ENCODE measurements at regions of chr14 and their contacts with region 1.

Region 1: GRCh38 chr14:53109105-53110041 is 43.8 kb downstream of the DDHD1 start:
- DNase-seq: peak; percentile 76
- H3K4me3 Mint-ChIP-seq: no peak overlapping the region
- H3K27ac Mint-ChIP-seq: no peak overlapping the region
- H3K4me1 Mint-ChIP-seq: peaks cover 20% of the 10 kb centered on the region
- H3K27me3 Mint-ChIP-seq: no peaks in the 10 kb centered on the region

Region 2: DNA sequence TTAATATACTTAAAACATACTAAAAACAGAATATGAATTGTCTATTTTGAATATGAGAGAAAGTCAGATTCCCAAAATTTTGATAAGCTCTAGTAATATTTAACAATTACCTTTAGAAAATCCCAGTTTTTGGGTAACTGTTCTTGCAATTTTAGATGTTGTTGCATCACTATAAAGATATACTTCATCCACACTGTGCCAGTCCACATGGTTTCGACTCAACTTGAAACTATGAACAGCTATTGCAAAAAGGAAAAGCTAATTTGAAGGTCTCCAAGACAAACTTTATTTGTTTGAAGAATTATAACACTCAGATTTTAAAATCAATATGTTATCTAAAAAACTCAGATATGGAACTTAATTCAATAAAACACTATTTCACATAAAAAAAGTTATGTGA is 16.2 kb before region 1 on chr14:
- CTCF ChIA-PET with region 1: interaction called, 3 read pairs
- intact Hi-C with region 1: loop called (anchors 2 kb)
- DNase-seq: peak; percentile 27
- H3K4me3 Mint-ChIP-seq: no peak overlapping the region
- H3K27ac Mint-ChIP-seq: peak overlapping the region; percentile 41
- H3K4me1 Mint-ChIP-seq: peaks cover 7% of the 10 kb centered on the region
- H3K27me3 Mint-ChIP-seq: no peaks in the 10 kb centered on the region

Region 3: GRCh38 chr14:53126731-53127130 is 17.4 kb after region 1 on chr14:
- CTCF ChIA-PET with region 1: interaction called, 7 read pairs
- intact Hi-C with region 1: loop called (anchors 1 kb)
- DNase-seq: no peak
- H3K4me3 Mint-ChIP-seq: peak overlapping the region; percentile 56
- H3K27ac Mint-ChIP-seq: peak overlapping the region; percentile 72
- H3K4me1 Mint-ChIP-seq: peaks cover 38% of the 10 kb centered on the region
- H3K27me3 Mint-ChIP-seq: no peaks in the 10 kb centered on the region

Region 4: DNA sequence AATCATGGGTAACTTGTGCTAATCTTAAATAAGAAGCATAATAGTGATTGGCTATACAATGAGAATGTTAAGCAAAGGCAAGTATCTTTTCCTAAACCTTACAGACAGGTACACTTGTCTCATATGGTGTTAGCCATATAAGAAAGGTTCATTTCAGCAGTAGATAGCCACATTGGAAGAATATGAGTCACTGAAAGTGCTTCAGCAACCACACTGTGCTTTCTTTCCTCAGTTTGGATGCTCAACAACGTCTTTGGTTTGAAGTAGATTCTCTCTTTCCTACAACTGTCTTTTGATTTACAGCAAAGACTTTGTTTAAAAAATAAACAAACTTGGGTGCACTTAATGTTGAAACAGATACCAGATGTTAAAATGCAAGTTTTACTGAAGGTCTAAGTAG is 34.9 kb after region 1 on chr14:
- CTCF ChIA-PET with region 1: interaction called, 8 read pairs
- intact Hi-C with region 1: loop called (anchors 1 kb)
- DNase-seq: peak; percentile 31
- H3K4me3 Mint-ChIP-seq: no peak overlapping the region
- H3K27ac Mint-ChIP-seq: peak overlapping the region; percentile 18
- H3K4me1 Mint-ChIP-seq: peaks cover 62% of the 10 kb centered on the region
- H3K27me3 Mint-ChIP-seq: no peaks in the 10 kb centered on the region

Region 5: GRCh38 chr14:53167602-53168328 is 58.4 kb after region 1 on chr14:
- CTCF ChIA-PET with region 1: no interaction called
- intact Hi-C with region 1: no loop called
- DNase-seq: no peak
- H3K4me3 Mint-ChIP-seq: no peak overlapping the region
- H3K27ac Mint-ChIP-seq: no peak overlapping the region
- H3K4me1 Mint-ChIP-seq: no peaks in the 10 kb centered on the region
- H3K27me3 Mint-ChIP-seq: no peaks in the 10 kb centered on the region

Region 6: GRCh38 chr14:53190938-53191337 is 81.6 kb after region 1 on chr14:
- CTCF ChIA-PET with region 1: interaction called, 3 read pairs
- intact Hi-C with region 1: loop called (anchors 1 kb)
- DNase-seq: peak; percentile 72
- H3K4me3 Mint-ChIP-seq: peak overlapping the region; percentile 41
- H3K27ac Mint-ChIP-seq: peak overlapping the region; percentile 22
- H3K4me1 Mint-ChIP-seq: peaks cover 12% of the 10 kb centered on the region
- H3K27me3 Mint-ChIP-seq: no peaks in the 10 kb centered on the region